Dendritic cell treated with granulocyte-macrophage colony-stimulating factor and Interleukin-4, amounts not matched to agents 40 ng/mL and 50 ng/mL, for 4 days (primary cell): ENCODE measurements at regions of chr11 and their contacts with region 1.

Region 1: GRCh38 chr11:18588297-18589252 is at the start of gene UEVLD:
- H3K4me3 Mint-ChIP-seq: no peak within 1 kb of the TSS
- H3K27ac Mint-ChIP-seq: no peak within 1 kb of the TSS
- H3K4me1 Mint-ChIP-seq: peaks cover 5% of the 10 kb centered on the region
- H3K27me3 Mint-ChIP-seq: no peaks in the 10 kb centered on the region

Region 2: GRCh38 chr11:18526521-18527296 is 61.9 kb before region 1 on chr11 and contains the start of gene TSG101:
- intact Hi-C with region 1: loop called (anchors 1 kb)
- H3K4me3 Mint-ChIP-seq: peak within 1 kb of the TSS; percentile 99
- H3K27ac Mint-ChIP-seq: peak within 1 kb of the TSS; percentile 99
- H3K4me1 Mint-ChIP-seq: peaks cover 21% of the 10 kb centered on the region
- H3K27me3 Mint-ChIP-seq: no peaks in the 10 kb centered on the region

Region 3: GRCh38 chr11:18698341-18699268 is 110.0 kb after region 1 on chr11 and contains the start of gene TMEM86A:
- intact Hi-C with region 1: loop called (anchors 1 kb)
- H3K4me3 Mint-ChIP-seq: peak within 1 kb of the TSS; percentile 86
- H3K27ac Mint-ChIP-seq: peak within 1 kb of the TSS; percentile 90
- H3K4me1 Mint-ChIP-seq: peaks cover 69% of the 10 kb centered on the region
- H3K27me3 Mint-ChIP-seq: peaks cover 17% of the 10 kb centered on the region

Region 4: DNA sequence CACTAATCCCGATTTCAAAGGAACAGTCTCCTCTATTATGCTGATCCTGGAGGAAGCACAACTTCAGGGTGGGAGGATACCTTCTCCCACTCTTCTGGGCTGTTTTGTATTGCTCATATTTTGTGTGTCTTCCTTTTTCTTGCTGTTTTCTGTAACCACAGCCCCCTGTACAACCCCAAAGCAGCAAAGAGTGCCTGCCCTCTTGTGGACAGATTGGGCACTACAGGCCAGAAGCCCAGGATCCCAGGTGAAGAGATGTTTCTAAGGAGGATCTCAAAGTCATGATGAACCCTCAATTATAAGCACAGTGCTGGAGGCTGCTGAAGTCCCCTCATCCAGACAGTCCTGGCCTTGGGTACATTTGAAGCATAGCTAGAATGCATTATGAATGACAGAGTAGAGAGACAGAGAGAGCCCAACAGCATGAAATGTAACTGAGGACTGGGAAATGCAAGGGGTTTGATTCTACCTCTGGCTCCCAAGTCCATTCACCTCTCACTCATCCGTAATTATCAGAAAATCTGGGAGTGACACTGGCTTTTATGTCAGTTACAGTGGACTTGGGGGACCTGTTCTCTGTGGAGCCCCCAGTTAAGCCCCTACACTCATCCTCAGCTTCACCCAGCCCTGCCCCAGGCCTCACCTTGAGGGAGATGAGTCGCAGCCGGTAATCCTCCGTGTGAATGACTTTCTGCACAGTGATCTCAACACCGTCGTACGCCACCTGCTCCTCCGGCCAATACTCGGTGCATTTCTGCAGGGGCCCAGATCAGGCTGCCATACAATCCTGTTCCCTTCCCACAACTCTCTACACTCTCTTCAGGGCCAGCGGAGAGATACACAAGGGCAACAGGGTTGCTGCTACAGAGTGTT is 143.6 kb after region 1 on chr11:
- intact Hi-C with region 1: loop called (anchors 5 kb)
- H3K4me3 Mint-ChIP-seq: no peak overlapping the region
- H3K27ac Mint-ChIP-seq: no peak overlapping the region
- H3K4me1 Mint-ChIP-seq: peaks cover 12% of the 10 kb centered on the region
- H3K27me3 Mint-ChIP-seq: peaks cover 2% of the 10 kb centered on the region